H1 (cell line): ENCODE measurements at regions of chr11 and their contacts with region 1.

Region 1: DNA sequence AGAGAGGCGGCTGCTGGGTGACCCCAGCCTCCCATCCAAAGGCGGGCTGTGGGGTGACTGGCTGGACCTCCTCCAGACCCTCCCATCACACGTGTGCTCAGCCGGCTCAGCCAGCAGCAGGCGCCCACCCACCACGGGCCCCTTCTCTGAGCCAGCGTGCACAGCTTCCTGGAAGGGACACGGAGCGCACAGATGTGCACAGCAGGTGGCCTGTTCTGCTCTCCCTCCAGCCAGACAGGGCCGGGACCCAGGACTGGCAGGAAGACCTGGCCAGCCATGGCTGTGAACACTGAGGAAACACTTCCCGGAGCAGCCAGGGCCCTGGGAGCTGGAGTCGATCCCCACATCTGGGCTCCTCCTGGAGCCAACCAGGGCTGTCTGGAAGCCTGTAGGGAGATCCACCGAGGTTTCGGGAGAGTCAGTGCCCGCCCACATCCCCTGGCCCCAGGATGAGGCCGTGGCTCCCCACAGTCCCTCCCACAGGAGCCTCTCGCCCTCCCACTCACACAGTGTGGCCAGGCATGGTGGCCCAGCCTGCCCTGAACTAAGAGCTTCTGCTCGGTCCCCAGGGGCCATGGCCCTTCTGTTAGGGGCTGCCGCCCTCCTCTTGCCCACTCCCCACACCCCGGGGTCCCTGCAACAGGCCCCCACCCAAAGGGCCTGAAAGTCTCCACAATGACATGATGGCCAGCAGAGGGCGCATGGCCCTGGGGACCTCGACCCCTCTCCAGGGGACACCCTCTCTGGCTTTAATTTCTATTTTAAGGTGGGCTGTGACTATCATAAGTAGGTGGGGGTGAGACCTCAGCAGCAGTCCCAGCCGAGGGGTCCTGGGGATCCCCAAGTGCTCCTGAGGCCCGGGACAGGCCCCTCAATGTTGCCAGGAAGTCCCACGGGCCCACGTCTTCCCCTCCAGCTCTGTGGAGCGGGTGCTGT is 90.6 kb upstream of the FGF3 start:
- DNase-seq: peak in 1 of 2 experiments; percentile 77
- H3K4me3 ChIP-seq: no peak overlapping the region
- H3K27ac ChIP-seq: no peak overlapping the region
- H3K4me1 ChIP-seq: peaks cover 0 to 3% (median 0%) of the 10 kb centered on the region in 4 experiments; a peak in 2 of 7 replicates
- H3K27me3 ChIP-seq: no peaks in the 10 kb centered on the region; a peak in 1 of 7 replicates
- CTCF ChIP-seq: peak; percentile 64 to 82 (median 67); a peak in 3 of 4 replicates
- EP300 ChIP-seq: no peak
- POLR2A ChIP-seq: no peak
- RAD21 ChIP-seq: peak; percentile 40 to 55; a peak in 3 of 4 replicates

Region 2: GRCh38 chr11:69530278-69531070 is 379.4 kb before region 1 on chr11:
- CTCF ChIA-PET with region 1: no interaction called
- POLR2A ChIA-PET with region 1: no interaction called
- DNase-seq: no peak
- H3K4me3 ChIP-seq: no peak overlapping the region
- H3K27ac ChIP-seq: no peak overlapping the region
- H3K4me1 ChIP-seq: peaks cover 0 to 5% (median under 1%) of the 10 kb centered on the region in 4 experiments; a peak in 2 of 7 replicates
- H3K27me3 ChIP-seq: no peaks in the 10 kb centered on the region; a peak in 1 of 7 replicates
- CTCF ChIP-seq: no peak
- EP300 ChIP-seq: no peak
- POLR2A ChIP-seq: no peak
- RAD21 ChIP-seq: no peak

Region 3: GRCh38 chr11:69704508-69705253 is 205.1 kb before region 1 on chr11:
- CTCF ChIA-PET with region 1: interaction called, 10 read pairs
- POLR2A ChIA-PET with region 1: no interaction called
- DNase-seq: peak in 1 of 2 experiments; percentile 96
- H3K4me3 ChIP-seq: peak overlapping the region; percentile 37 to 78 (median 62)
- H3K27ac ChIP-seq: 0 out of 2 replicates have a peak overlapping the region, but pooled peaks have one; percentile 44
- H3K4me1 ChIP-seq: peaks cover 11 to 36% (median 24%) of the 10 kb centered on the region in 4 experiments
- H3K27me3 ChIP-seq: peaks cover 0 to 26% (median 17%) of the 10 kb centered on the region in 4 experiments; a peak in 5 of 7 replicates
- CTCF ChIP-seq: peak; percentile 63 to 76 (median 75)
- EP300 ChIP-seq: no peak
- POLR2A ChIP-seq: no peak
- RAD21 ChIP-seq: peak; percentile 70 to 82

Region 4: GRCh38 chr11:69925366-69926196 is 15.8 kb after region 1 on chr11:
- CTCF ChIA-PET with region 1: interaction called, 46 read pairs
- POLR2A ChIA-PET with region 1: no interaction called
- DNase-seq: no peak
- H3K4me3 ChIP-seq: no peak overlapping the region
- H3K27ac ChIP-seq: no peak overlapping the region
- H3K4me1 ChIP-seq: peaks cover 0 to 3% (median 0%) of the 10 kb centered on the region in 4 experiments; a peak in 1 of 7 replicates
- H3K27me3 ChIP-seq: no peaks in the 10 kb centered on the region; a peak in 1 of 7 replicates
- CTCF ChIP-seq: no peak
- EP300 ChIP-seq: no peak
- POLR2A ChIP-seq: no peak
- RAD21 ChIP-seq: no peak

Region 5: DNA sequence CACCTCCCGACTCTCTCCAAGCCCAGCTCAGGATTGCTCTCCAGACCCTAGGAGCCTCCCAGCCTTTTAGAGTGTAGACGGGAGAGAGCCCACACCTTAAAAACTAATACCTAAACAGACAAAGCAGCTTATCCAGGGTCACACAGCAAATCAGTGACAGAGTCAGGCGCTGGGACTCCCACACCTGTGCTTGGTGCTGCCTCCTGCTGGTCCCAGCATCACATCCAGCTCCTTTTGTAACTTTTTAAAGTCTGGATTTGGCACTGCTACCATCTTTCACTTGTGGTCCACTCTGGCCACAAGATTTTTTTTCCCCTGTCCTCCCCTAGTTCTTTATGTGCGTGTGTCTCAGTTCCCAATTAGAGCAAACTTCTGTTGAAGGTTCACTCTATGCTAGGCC is 173.0 kb after region 1 on chr11:
- CTCF ChIA-PET with region 1: interaction called, 11 read pairs
- POLR2A ChIA-PET with region 1: no interaction called
- DNase-seq: no peak
- H3K4me3 ChIP-seq: no peak overlapping the region
- H3K27ac ChIP-seq: no peak overlapping the region
- H3K4me1 ChIP-seq: peaks cover 0 to 9% (median 3%) of the 10 kb centered on the region in 4 experiments; a peak in 5 of 7 replicates
- H3K27me3 ChIP-seq: peaks cover 14 to 30% (median 27%) of the 10 kb centered on the region in 4 experiments
- CTCF ChIP-seq: peak; percentile 46 to 68 (median 61)
- EP300 ChIP-seq: no peak
- POLR2A ChIP-seq: no peak
- RAD21 ChIP-seq: peak; percentile 41 to 66

Region 6: GRCh38 chr11:70191495-70192140 is 281.8 kb after region 1 on chr11:
- CTCF ChIA-PET with region 1: interaction called, 59 read pairs
- POLR2A ChIA-PET with region 1: no interaction called
- DNase-seq: peak; percentile 59 to 97
- H3K4me3 ChIP-seq: no peak overlapping the region
- H3K27ac ChIP-seq: no peak overlapping the region
- H3K4me1 ChIP-seq: no peaks in the 10 kb centered on the region
- H3K27me3 ChIP-seq: no peaks in the 10 kb centered on the region
- CTCF ChIP-seq: peak; percentile 94 to 99 (median 98)
- EP300 ChIP-seq: no peak
- POLR2A ChIP-seq: no peak
- RAD21 ChIP-seq: peak; percentile 98 to 100

Region 7: DNA sequence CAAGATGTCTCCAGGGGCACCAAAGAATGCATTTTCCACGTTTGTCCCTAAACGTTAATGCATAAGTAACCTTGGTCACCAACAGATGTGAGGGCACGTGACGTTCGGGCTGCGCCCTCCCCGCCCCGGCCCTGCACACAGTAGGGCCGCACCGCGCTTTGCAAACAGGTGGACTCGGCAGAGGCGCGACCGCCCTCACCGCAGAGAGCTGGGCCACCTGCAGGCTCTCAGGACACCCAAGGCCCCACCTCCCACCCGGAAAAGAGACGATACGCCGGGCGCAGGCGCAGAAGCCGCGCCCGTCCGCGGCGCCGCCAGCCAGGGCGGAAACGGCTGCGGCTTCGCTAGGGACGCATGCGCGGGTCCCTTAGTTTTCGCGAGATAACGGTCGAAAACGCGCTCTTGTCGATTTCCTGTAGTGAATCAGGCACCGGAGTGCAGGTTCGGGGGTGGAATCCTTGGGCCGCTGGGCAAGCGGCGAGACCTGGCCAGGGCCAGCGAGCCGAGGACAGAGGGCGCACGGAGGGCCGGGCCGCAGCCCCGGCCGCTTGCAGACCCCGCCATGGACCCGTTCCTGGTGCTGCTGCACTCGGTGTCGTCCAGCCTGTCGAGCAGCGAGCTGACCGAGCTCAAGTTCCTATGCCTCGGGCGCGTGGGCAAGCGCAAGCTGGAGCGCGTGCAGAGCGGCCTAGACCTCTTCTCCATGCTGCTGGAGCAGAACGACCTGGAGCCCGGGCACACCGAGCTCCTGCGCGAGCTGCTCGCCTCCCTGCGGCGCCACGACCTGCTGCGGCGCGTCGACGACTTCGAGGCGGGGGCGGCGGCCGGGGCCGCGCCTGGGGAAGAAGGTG is 293.3 kb after region 1 on chr11 and contains the start of gene FADD:
- CTCF ChIA-PET with region 1: interaction called, 59 read pairs
- POLR2A ChIA-PET with region 1: interaction called, 3 read pairs
- DNase-seq: peak; percentile 72 to 90
- H3K4me3 ChIP-seq: peak within 1 kb of the TSS; percentile 86 to 90 (median 86)
- H3K27ac ChIP-seq: peak within 1 kb of the TSS; percentile 74
- H3K4me1 ChIP-seq: peaks cover 7 to 17% (median 9%) of the 10 kb centered on the region in 4 experiments
- H3K27me3 ChIP-seq: no peaks in the 10 kb centered on the region
- CTCF ChIP-seq: no peak
- EP300 ChIP-seq: no peak
- POLR2A ChIP-seq: peak in 1 of 2 experiments; percentile 40; a peak in 1 of 3 replicates
- RAD21 ChIP-seq: no peak; a peak in 1 of 4 replicates
- total RNA-seq, gene FADD: 43.8 and 43.9 TPM in 2 replicates